ENCODE measurements at regions of chr5 and their contacts with region 1.

Region 1: DNA sequence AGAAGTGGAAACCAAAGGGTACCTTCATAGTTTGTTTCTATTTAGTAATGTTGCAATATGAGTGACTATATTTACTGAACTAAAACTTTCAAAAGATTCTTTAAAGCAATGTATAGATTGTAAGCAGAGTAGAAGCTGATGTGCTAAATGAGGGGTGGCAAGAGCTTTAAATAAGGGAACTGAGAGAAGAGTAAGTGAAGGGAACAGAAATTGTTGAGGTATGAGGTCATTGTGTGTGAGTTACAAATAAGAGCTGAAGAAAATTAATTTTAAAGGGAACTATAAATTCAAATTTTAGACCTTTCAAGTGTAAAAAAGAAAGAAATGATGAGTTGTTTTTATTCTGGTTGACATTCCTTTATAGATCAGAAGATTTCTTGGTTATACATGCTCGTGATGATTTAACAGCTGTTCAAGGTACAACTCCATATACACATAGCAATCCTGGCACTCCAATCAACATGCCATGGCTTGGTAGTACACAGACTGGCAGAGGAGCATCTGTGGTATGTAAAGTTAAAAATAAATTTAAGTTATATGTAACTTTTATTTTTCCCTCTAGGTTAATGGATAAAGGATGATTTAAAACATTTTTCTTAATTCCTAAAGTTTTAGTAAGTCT is 135.1 kb upstream of the TNFAIP8 start:
- DNase-seq: no peak
- ATAC-seq: no peak
- H3K4me3 ChIP-seq: no peak overlapping the region
- H3K4me3 Mint-ChIP-seq: no peak overlapping the region
- H3K27ac ChIP-seq: no peak overlapping the region
- H3K27ac Mint-ChIP-seq: peak overlapping the region; percentile 0 to 26
- H3K4me1 ChIP-seq: no peaks in the 10 kb centered on the region
- H3K4me1 Mint-ChIP-seq: peaks cover 0 to 5% (median 0%) of the 10 kb centered on the region in 3 donors
- H3K27me3 ChIP-seq: no peaks in the 10 kb centered on the region
- H3K27me3 Mint-ChIP-seq: no peaks in the 10 kb centered on the region

Region 2: DNA sequence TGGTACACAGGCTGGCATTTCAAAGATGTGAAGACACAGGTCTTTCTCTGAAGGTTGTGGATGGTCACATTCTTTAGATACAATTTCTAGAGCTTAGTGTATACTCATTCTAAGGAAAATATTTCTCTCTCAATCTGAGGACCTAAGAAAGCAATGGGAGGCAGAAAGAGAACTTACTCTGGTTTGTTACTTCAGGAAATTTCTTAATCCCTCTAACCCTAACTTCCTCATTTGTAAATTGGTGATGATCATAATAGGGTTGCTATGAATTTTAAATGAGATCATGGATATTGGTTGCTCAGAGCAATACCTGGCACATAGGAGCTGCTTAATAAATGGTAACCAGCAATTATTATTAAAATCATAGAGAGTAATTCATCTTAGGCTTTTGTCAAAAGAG is 430.8 kb after region 1 on chr5:
- CTCF ChIA-PET with region 1: no interaction called
- POLR2A ChIA-PET with region 1: interaction called in 1 of 2 experiments, 22 read pairs
- DNase-seq: no peak
- ATAC-seq: no peak
- H3K4me3 ChIP-seq: no peak overlapping the region
- H3K4me3 Mint-ChIP-seq: no peak overlapping the region
- H3K27ac ChIP-seq: no peak overlapping the region
- H3K27ac Mint-ChIP-seq: no peak overlapping the region
- H3K4me1 ChIP-seq: no peaks in the 10 kb centered on the region
- H3K4me1 Mint-ChIP-seq: no peaks in the 10 kb centered on the region
- H3K27me3 ChIP-seq: no peaks in the 10 kb centered on the region
- H3K27me3 Mint-ChIP-seq: peaks cover 5 to 14% of the 10 kb centered on the region in 2 donors

Measured in T-cell (primary cell).